Activated CD4-positive, alpha-beta memory T cell treated with anti-CD3 and anti-CD28 coated beads for 36 hours (primary cell): ENCODE measurements at regions of chr14 and their contacts with region 1.

Region 1: DNA sequence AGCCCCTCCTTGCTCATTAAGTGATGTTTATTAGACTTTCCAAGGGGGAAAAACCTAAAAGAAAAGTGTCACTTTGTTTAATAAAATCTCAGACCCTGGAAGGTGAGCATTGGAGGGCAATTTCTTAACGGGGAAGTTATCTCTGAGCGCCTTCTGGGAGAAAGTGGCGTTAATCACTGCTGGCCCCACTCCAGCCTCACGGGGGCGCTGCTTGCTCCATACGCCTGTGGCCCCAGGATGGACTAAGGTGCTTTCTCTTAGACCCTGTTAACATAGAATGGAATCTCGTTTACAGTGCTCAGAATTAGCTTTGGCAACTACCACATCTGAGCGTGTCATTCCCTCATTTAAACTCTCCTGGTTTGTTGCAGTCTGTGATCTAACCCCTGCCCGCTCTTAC is 16.4 kb upstream of the PRIMA1 start:
- DNase-seq: peak; percentile 22
- H3K4me3 Mint-ChIP-seq: no peak overlapping the region
- H3K27ac Mint-ChIP-seq: no peak overlapping the region
- H3K4me1 Mint-ChIP-seq: peaks cover 11% of the 10 kb centered on the region
- H3K27me3 Mint-ChIP-seq: peaks cover 9% of the 10 kb centered on the region

Region 2: DNA sequence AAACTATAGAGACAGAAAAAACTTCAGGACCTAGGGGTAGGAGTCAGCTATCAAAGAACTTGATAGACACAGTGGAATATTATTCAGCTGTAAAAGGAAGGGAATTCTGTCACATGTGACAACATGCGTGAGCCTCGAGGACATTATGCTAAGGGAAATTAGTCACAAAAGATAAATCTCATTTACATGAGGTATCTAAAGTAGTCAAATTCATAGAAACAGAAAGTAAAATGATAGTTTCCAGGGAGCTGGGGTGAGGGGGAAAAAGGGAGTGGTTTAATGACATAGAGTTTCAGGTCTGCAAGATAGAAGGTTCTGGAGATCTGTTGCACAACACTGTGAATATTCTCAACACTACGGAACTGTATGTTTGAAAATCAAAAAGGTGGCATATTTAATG is 33.6 kb after region 1 on chr14:
- CTCF ChIA-PET with region 1: no interaction called
- POLR2A ChIA-PET with region 1: no interaction called
- intact Hi-C with region 1: loop called (anchors 1 kb)
- DNase-seq: no peak
- H3K4me3 Mint-ChIP-seq: no peak overlapping the region
- H3K27ac Mint-ChIP-seq: no peak overlapping the region
- H3K4me1 Mint-ChIP-seq: peaks cover 5% of the 10 kb centered on the region
- H3K27me3 Mint-ChIP-seq: peaks cover 9% of the 10 kb centered on the region

Region 3: GRCh38 chr14:93892923-93893558 is 88.4 kb after region 1 on chr14:
- CTCF ChIA-PET with region 1: interaction called, 3 read pairs
- POLR2A ChIA-PET with region 1: no interaction called
- intact Hi-C with region 1: loop called (anchors 5 kb)
- DNase-seq: peak; percentile 76
- H3K4me3 Mint-ChIP-seq: no peak overlapping the region
- H3K27ac Mint-ChIP-seq: no peak overlapping the region
- H3K4me1 Mint-ChIP-seq: no peaks in the 10 kb centered on the region
- H3K27me3 Mint-ChIP-seq: peaks cover 15% of the 10 kb centered on the region

Region 4: GRCh38 chr14:93906341-93907329 is 102.0 kb after region 1 on chr14:
- CTCF ChIA-PET with region 1: interaction called, 3 read pairs
- POLR2A ChIA-PET with region 1: no interaction called
- intact Hi-C with region 1: loop called (anchors 5 kb)
- DNase-seq: peak; percentile 82
- H3K4me3 Mint-ChIP-seq: no peak overlapping the region
- H3K27ac Mint-ChIP-seq: no peak overlapping the region
- H3K4me1 Mint-ChIP-seq: no peaks in the 10 kb centered on the region
- H3K27me3 Mint-ChIP-seq: peaks cover 12% of the 10 kb centered on the region